ENCODE measurements at regions of chr4 and their contacts with region 1.

Region 1: GRCh38 chr4:173538148-173538908 is 8.3 kb upstream of the HAND2 start:
- DNase-seq: peak in 1 of 2 experiments; percentile 74
- H3K4me3 ChIP-seq: peak overlapping the region; percentile 7 to 55 (median 16); a peak in 7 of 8 replicates
- H3K27ac ChIP-seq: no peak overlapping the region
- H3K4me1 ChIP-seq: peaks cover 3 to 11% (median 8%) of the 10 kb centered on the region in 4 experiments; a peak in 6 of 7 replicates
- H3K27me3 ChIP-seq: peaks cover 69 to 89% (median 77%) of the 10 kb centered on the region in 4 experiments
- CTCF ChIP-seq: no peak
- EP300 ChIP-seq: no peak
- POLR2A ChIP-seq: no peak
- RAD21 ChIP-seq: no peak

Region 2: GRCh38 chr4:173522123-173522950 is 16.0 kb before region 1 on chr4:
- CTCF ChIA-PET with region 1: interaction called, 28 read pairs
- POLR2A ChIA-PET with region 1: interaction called, 4 read pairs
- DNase-seq: peak in 1 of 2 experiments; percentile 76
- H3K4me3 ChIP-seq: peak overlapping the region; percentile 36 to 53 (median 42); a peak in 7 of 8 replicates
- H3K27ac ChIP-seq: no peak overlapping the region
- H3K4me1 ChIP-seq: peaks cover 8 to 41% (median 30%) of the 10 kb centered on the region in 4 experiments
- H3K27me3 ChIP-seq: peaks cover 97 to 100% (median 100%) of the 10 kb centered on the region in 4 experiments
- CTCF ChIP-seq: no peak
- EP300 ChIP-seq: no peak
- POLR2A ChIP-seq: no peak
- RAD21 ChIP-seq: no peak

Region 3: DNA sequence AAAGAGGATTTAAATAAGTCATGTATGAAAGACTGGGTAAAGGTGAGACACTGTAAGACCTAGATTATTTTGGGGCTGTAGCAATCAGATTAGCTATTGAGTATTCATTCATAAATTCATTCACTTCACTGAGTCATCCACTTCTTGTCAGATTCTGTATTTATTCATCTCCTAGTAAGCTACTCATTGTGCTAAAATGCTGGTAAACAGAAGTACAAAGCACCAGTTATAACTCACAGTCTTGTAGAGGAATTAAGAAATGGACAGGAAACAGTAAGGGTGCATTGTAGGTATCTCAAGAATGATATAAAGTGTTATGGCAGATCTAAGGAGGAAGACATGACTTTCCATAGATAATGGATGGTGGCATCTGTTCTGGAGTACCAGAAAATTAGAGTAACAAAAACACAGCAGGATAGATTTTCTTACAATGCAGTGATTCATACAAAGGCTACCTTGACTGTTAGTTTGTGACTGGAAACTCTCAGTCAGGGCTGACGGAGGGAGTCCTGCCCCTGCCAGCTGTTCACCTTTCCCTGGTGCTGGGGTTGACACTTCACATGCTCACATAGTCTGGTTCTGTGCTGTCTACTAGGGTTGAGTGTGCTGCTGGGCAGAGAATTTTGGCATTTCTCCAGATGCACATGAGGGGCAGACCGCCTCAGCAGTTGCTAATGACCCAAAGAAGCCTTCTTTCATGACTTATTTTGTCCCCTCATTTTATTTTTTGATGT is 18.2 kb after region 1 on chr4:
- CTCF ChIA-PET with region 1: interaction called, 11 read pairs
- POLR2A ChIA-PET with region 1: no interaction called
- DNase-seq: no peak
- H3K4me3 ChIP-seq: no peak overlapping the region
- H3K27ac ChIP-seq: no peak overlapping the region
- H3K4me1 ChIP-seq: peaks cover 0 to 2% (median 0%) of the 10 kb centered on the region in 4 experiments; a peak in 2 of 7 replicates
- H3K27me3 ChIP-seq: no peaks in the 10 kb centered on the region
- CTCF ChIP-seq: no peak
- EP300 ChIP-seq: no peak
- POLR2A ChIP-seq: no peak
- RAD21 ChIP-seq: no peak